ENCODE measurements at regions of chr9 and their contacts with region 1.

Region 1: GRCh38 chr9:91963711-91964240 is 13.7 kb upstream of the ROR2 start:
- DNase-seq: no peak
- ATAC-seq: no peak
- H3K4me3 ChIP-seq: no peak overlapping the region
- H3K27ac ChIP-seq: no peak overlapping the region
- H3K4me1 ChIP-seq: no peaks in the 10 kb centered on the region
- H3K27me3 ChIP-seq: no peaks in the 10 kb centered on the region
- CTCF ChIP-seq: no peak
- POLR2A ChIP-seq: no peak
- RAD21 ChIP-seq: no peak

Region 2: DNA sequence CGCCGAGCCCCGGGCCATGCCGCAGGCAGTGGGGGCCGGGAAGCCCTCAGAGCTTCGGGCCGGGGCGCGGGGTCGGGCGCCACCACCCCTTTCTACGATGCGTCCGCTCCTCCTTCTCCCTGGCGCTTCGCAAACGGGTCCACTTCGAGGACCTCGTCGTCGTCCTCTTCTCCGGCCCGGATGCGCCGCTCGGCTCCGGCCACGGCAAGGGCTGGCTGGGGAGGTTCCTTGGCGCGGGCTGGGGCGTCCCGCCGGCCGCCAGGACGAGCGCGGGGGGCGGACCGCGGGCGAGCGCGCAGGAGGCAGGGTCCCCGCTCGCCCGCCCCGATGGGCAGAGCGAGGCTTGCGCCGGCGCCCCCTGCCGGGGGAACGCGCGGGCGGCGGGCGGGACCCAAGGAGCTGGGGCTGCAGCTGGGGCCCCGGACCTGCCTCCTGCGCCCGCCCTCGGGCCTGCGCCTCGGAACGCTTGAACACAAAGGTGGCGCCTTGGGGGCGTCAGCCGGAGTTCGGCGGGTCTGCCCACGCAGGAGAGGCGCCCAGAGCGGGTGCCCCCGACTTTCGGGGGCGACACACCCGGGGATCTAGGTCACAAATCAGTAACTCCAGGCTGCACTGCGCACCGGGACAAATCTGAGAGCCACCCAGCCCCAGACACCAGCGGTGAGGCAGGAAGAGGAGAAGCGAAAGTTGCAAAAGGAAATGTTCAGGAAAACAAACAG is 13.7 kb before region 1 on chr9 and contains the start of gene ROR2:
- CTCF ChIA-PET with region 1: interaction called, 14 read pairs
- POLR2A ChIA-PET with region 1: interaction called, 3 read pairs
- RAD21 ChIA-PET with region 1: no interaction called
- intact Hi-C with region 1: no loop called
- DNase-seq: peak; percentile 37
- ATAC-seq: peak; percentile 84
- H3K4me3 ChIP-seq: peak within 1 kb of the TSS; percentile 80 to 84
- H3K27ac ChIP-seq: peak within 1 kb of the TSS; percentile 78
- H3K4me1 ChIP-seq: peaks cover 14 to 19% of the 10 kb centered on the region in 2 experiments
- H3K27me3 ChIP-seq: no peaks in the 10 kb centered on the region
- CTCF ChIP-seq: peak; percentile 34 to 61 (median 46); a peak in 4 of 6 replicates
- POLR2A ChIP-seq: no peak
- RAD21 ChIP-seq: peak; percentile 49
- total RNA-seq, gene ROR2: 15.7 TPM

Region 3: DNA sequence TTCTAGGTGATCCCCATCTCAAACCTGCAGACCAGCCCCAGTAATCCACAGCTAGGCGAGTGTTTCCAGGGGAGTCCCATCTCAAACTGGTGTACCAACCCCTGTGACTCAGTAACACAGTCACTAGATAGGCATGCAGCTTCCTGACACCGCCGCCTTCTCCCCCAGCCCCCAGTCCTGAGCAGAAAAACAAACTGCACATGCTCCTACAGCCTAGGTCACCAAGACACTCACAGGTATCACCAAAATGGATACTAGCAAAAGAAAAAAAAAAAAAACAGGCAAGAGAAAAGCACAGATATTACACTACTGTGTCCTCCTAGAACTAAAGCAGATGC is 136.8 kb after region 1 on chr9:
- CTCF ChIA-PET with region 1: no interaction called
- POLR2A ChIA-PET with region 1: no interaction called
- RAD21 ChIA-PET with region 1: no interaction called
- intact Hi-C with region 1: no loop called
- DNase-seq: peak; percentile 78
- ATAC-seq: peak; percentile 91
- H3K4me3 ChIP-seq: peak overlapping the region; percentile 21 to 53; a peak in 3 of 4 replicates
- H3K27ac ChIP-seq: peak overlapping the region; percentile 86
- H3K4me1 ChIP-seq: peaks cover 45 to 68% of the 10 kb centered on the region in 2 experiments
- H3K27me3 ChIP-seq: no peaks in the 10 kb centered on the region
- CTCF ChIP-seq: no peak
- POLR2A ChIP-seq: no peak
- RAD21 ChIP-seq: no peak

Measured in HCT116 (cell line).